ENCODE measurements at regions of chr11 and their contacts with region 1.

Region 1: DNA sequence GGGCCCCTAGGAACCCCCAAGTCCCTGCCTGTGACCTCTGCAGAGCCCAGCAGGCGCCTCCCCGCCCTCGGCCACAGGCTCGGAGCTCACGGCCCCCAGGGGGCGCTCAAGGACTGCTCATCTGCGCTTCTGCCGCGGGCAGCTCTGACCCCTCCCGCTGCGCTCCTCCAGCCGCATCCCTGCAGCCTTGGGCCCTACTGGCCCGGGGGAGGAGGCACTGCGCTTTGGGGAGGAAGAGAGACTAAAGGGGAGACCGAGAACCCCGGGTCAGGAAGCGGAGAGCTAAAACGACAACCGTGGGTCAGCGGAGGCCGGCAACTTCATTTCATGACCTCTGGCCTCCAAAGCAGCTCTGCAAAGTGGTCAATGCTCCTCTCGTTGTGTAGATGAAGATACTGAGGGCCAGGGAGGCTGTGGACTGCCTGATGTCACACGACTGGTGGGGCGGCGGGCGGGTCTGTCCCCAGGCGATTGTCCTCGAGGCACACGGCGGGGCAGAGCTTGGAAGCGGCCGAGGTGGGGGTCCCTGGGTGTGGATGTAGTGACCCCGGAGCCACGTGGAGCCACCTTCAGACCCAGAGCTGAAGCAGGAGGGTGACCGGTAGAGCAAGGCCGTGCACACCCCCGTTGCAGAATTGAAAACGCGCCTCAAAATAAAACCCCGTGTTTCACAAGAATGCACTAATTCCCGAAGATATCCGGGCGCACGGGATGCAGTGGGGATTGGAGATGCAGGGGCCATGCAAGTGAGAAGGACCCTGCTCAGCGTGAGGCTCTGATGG is 2.7 kb upstream of the KRTAP5-6 start:
- DNase-seq: peak; percentile 50 to 75 (median 70)
- H3K4me3 ChIP-seq: peak overlapping the region in 1 of 2 donors; percentile 19
- H3K4me3 Mint-ChIP-seq: peak overlapping the region in 1 of 8 donors; percentile 20
- H3K27ac ChIP-seq: no peak overlapping the region
- H3K27ac Mint-ChIP-seq: peak overlapping the region in 2 of 7 donors; percentile 18 to 46
- H3K4me1 ChIP-seq: peaks cover 11% of the 10 kb centered on the region
- H3K4me1 Mint-ChIP-seq: peaks cover 3 to 8% (median 4%) of the 10 kb centered on the region in 4 donors
- H3K27me3 ChIP-seq: peaks cover 4% of the 10 kb centered on the region
- H3K27me3 Mint-ChIP-seq: peaks cover 12 to 24% of the 10 kb centered on the region in 2 donors

Region 2: GRCh38 chr11:1202776-1203504 is 491.3 kb before region 1 on chr11:
- CTCF ChIA-PET with region 1: no interaction called
- POLR2A ChIA-PET with region 1: no interaction called
- intact Hi-C with region 1: no loop called
- DNase-seq: peak; percentile 37 to 61 (median 49)
- H3K4me3 ChIP-seq: no peak overlapping the region
- H3K4me3 Mint-ChIP-seq: no peak overlapping the region
- H3K27ac ChIP-seq: no peak overlapping the region
- H3K27ac Mint-ChIP-seq: no peak overlapping the region
- H3K4me1 ChIP-seq: no peaks in the 10 kb centered on the region
- H3K4me1 Mint-ChIP-seq: no peaks in the 10 kb centered on the region
- H3K27me3 ChIP-seq: no peaks in the 10 kb centered on the region
- H3K27me3 Mint-ChIP-seq: peaks cover 0 to 3% of the 10 kb centered on the region in 2 donors

Region 3: DNA sequence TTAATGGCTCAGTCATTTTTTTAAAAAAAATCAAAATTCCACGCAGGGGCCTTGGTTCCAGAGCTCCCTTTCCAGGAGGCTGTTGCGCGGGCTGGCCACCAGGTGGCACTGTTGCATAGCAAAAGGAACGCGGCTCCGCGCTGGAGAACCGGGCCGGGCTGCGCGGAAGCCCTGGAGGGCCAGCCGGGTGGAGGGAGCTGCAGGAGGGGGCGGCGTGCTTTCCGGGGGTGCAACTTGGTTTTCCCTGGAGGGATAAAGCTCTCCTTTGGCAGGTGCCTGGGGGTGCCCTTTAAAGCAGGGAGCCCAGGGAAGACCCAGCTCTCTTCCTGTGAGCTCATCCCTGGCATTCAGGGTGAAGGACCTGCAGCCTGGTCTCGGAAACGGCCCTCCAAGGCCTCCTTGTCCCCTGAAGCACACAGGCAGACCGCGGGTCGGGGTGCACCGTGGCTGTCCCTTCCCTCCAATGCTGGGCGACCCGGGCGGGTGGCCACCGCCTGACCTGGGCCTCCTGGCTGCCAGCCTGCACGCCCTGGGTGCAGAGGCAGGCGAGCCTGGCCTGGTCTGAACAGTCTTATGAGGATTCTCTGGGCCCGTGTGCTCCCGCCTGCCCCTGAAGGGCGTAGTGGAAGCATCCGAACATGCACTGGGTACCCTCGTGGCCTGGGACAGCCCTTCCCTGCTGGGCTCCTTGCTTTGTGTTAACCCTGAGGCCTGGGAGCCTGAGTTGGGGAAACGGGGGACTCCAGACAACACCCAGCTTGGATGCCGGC is 41.3 kb before region 1 on chr11:
- CTCF ChIA-PET with region 1: interaction called, 59 read pairs
- POLR2A ChIA-PET with region 1: interaction called, 6 read pairs
- intact Hi-C with region 1: no loop called
- DNase-seq: peak; percentile 62 to 79 (median 72)
- H3K4me3 ChIP-seq: no peak overlapping the region
- H3K4me3 Mint-ChIP-seq: no peak overlapping the region
- H3K27ac ChIP-seq: no peak overlapping the region
- H3K27ac Mint-ChIP-seq: peak overlapping the region in 1 of 7 donors; percentile 57
- H3K4me1 ChIP-seq: no peaks in the 10 kb centered on the region
- H3K4me1 Mint-ChIP-seq: peaks cover 0 to 2% (median under 1%) of the 10 kb centered on the region in 4 donors
- H3K27me3 ChIP-seq: no peaks in the 10 kb centered on the region
- H3K27me3 Mint-ChIP-seq: peaks cover 7 to 15% of the 10 kb centered on the region in 2 donors

Region 4: GRCh38 chr11:1706634-1707400 is 12.6 kb after region 1 on chr11:
- CTCF ChIA-PET with region 1: interaction called, 16 read pairs
- POLR2A ChIA-PET with region 1: interaction called, 3 read pairs
- intact Hi-C with region 1: no loop called
- DNase-seq: peak in 2 of 5 donors; percentile 11 to 19
- H3K4me3 ChIP-seq: no peak overlapping the region
- H3K4me3 Mint-ChIP-seq: peak overlapping the region in 1 of 8 donors; percentile 20
- H3K27ac ChIP-seq: no peak overlapping the region
- H3K27ac Mint-ChIP-seq: peak overlapping the region in 1 of 7 donors; percentile 30
- H3K4me1 ChIP-seq: no peaks in the 10 kb centered on the region
- H3K4me1 Mint-ChIP-seq: peaks cover 0 to 3% (median under 1%) of the 10 kb centered on the region in 4 donors
- H3K27me3 ChIP-seq: no peaks in the 10 kb centered on the region
- H3K27me3 Mint-ChIP-seq: peaks cover 5 to 18% of the 10 kb centered on the region in 2 donors

Region 5: GRCh38 chr11:1744137-1744886 is 50.1 kb after region 1 on chr11:
- CTCF ChIA-PET with region 1: no interaction called
- POLR2A ChIA-PET with region 1: no interaction called
- intact Hi-C with region 1: no loop called
- DNase-seq: no peak
- H3K4me3 ChIP-seq: no peak overlapping the region
- H3K4me3 Mint-ChIP-seq: no peak overlapping the region
- H3K27ac ChIP-seq: no peak overlapping the region
- H3K27ac Mint-ChIP-seq: no peak overlapping the region
- H3K4me1 ChIP-seq: peaks cover 3% of the 10 kb centered on the region
- H3K4me1 Mint-ChIP-seq: peaks cover 0 to 11% (median 6%) of the 10 kb centered on the region in 4 donors
- H3K27me3 ChIP-seq: no peaks in the 10 kb centered on the region
- H3K27me3 Mint-ChIP-seq: peaks cover 0 to 4% of the 10 kb centered on the region in 2 donors

Region 6: DNA sequence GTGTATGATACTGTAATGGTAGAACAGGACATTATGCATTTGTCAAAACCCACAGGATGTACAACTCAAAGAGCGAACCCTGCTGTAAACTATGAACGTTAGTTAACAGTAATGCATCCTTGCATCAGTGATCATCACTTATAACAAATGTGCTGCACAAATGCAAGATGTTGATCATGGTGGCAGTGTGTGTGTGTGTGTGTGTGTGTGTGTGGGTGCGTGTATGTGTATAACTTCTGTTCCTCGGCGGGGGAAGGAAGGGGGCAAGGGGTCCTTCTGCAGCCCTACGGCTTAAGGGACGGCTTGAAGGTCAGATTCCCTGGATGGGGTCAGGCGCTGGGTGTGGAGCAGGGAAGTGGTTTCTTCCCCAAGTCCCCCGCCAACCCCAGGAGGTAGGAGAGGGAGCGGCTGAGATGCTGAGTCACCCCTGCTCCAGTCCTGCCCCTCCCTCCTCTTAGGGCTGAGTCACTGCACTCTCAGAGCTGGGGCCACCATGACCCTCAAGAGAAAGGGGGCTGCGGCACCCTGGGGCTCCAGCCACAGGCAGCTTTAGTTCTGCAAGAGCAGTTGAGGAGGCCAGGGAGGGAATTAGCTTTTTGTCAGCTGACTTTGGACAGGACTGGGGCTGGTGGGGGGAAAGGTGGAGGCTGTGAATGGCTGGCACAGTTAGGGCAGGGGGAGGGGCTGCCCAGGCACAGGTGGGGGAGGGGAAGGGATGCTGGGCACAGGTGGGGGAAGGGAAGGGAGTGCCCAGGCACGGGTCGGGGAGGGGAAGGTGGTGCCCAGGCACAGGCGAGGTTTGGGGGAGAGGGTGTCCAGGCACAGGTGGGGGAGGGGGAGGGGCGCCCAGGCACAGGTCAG is 78.2 kb after region 1 on chr11:
- CTCF ChIA-PET with region 1: interaction called, 26 read pairs
- POLR2A ChIA-PET with region 1: no interaction called
- intact Hi-C with region 1: no loop called
- DNase-seq: peak; percentile 29 to 70 (median 37)
- H3K4me3 ChIP-seq: no peak overlapping the region
- H3K4me3 Mint-ChIP-seq: peak overlapping the region; percentile 50 to 87 (median 64)
- H3K27ac ChIP-seq: no peak overlapping the region
- H3K27ac Mint-ChIP-seq: peak overlapping the region in 6 of 7 donors; percentile 37 to 85 (median 74)
- H3K4me1 ChIP-seq: peaks cover 19% of the 10 kb centered on the region
- H3K4me1 Mint-ChIP-seq: peaks cover 8 to 23% (median 15%) of the 10 kb centered on the region in 4 donors
- H3K27me3 ChIP-seq: no peaks in the 10 kb centered on the region
- H3K27me3 Mint-ChIP-seq: no peaks in the 10 kb centered on the region

Region 7: DNA sequence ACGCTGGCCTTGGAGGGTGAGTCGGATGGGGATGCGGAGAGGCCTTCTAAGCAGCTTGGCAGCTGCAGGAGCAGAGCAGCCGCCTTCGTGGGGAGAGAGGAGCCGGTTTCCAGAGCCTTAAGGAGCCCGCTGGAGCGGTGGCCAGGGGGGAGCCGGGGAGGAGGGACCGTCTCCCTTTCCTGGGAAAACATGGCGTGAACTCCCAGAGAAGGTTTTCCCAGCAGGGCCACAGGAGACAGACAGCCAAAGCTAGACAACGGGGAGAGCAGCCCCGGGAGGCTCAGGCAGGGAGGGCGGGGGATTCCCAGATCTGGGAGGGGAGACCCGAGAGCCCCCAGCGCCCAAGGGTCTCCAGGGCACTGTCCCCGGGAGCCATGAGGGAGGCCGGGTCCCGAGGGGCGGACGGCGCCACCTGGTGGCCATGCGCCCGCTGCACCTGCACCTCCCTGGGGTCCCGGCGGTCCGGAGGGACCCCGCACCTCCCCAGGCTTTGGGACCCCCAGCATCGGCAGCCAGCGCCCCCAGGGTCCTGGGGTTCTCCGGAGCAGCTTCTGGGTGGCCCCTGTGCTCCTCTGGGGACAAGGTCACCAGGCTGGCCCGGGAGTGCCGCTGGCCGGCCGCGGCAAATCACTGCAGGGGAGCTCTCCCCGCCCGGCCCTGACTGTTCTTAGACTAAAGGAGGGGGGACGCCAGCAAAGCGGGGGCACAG is 138.1 kb after region 1 on chr11:
- CTCF ChIA-PET with region 1: interaction called, 351 read pairs
- POLR2A ChIA-PET with region 1: interaction called, 25 read pairs
- intact Hi-C with region 1: loop called (anchors 1 kb)
- DNase-seq: peak; percentile 33 to 71 (median 57)
- H3K4me3 ChIP-seq: no peak overlapping the region
- H3K4me3 Mint-ChIP-seq: no peak overlapping the region
- H3K27ac ChIP-seq: no peak overlapping the region
- H3K27ac Mint-ChIP-seq: peak overlapping the region in 1 of 7 donors; percentile 53
- H3K4me1 ChIP-seq: peaks cover 5% of the 10 kb centered on the region
- H3K4me1 Mint-ChIP-seq: no peaks in the 10 kb centered on the region
- H3K27me3 ChIP-seq: no peaks in the 10 kb centered on the region
- H3K27me3 Mint-ChIP-seq: peaks cover 7 to 14% of the 10 kb centered on the region in 2 donors

Region 8: DNA sequence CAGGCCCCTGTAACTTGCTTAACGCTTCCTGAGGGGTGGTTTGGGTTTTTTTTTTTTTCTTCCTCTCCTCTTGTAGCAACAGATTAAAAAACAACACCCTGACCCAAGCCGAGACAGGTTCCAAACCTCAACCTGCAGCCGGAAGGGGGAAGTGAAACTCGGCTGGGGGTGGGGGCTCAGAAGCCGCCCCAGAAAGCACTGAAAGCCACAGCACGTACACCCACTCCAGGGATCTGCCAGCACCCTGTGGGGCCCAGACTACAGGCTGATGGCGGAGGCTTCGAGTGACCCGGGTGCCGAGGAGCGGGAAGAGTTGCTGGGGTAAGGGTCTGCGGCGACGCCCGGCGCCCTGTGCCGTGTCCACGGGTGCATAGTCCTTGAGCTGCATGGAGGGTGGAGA is 158.6 kb after region 1 on chr11 and contains the start of gene LSP1:
- CTCF ChIA-PET with region 1: interaction called, 11 read pairs
- POLR2A ChIA-PET with region 1: interaction called, 6 read pairs
- intact Hi-C with region 1: no loop called
- DNase-seq: peak; percentile 88 to 92 (median 88)
- H3K4me3 ChIP-seq: peak within 1 kb of the TSS; percentile 39 to 95
- H3K4me3 Mint-ChIP-seq: peak within 1 kb of the TSS; percentile 95 to 99 (median 98)
- H3K27ac ChIP-seq: peak within 1 kb of the TSS; percentile 77
- H3K27ac Mint-ChIP-seq: peak within 1 kb of the TSS; percentile 96 to 99 (median 98)
- H3K4me1 ChIP-seq: peaks cover 82% of the 10 kb centered on the region
- H3K4me1 Mint-ChIP-seq: peaks cover 25 to 77% (median 50%) of the 10 kb centered on the region in 4 donors
- H3K27me3 ChIP-seq: no peaks in the 10 kb centered on the region
- H3K27me3 Mint-ChIP-seq: no peaks in the 10 kb centered on the region
- total RNA-seq, gene LSP1: 324 to 327 TPM

Region 9: GRCh38 chr11:2002807-2003206 is 308.6 kb after region 1 on chr11:
- CTCF ChIA-PET with region 1: interaction called, 74 read pairs
- POLR2A ChIA-PET with region 1: interaction called, 7 read pairs
- intact Hi-C with region 1: no loop called
- DNase-seq: no peak
- H3K4me3 ChIP-seq: no peak overlapping the region
- H3K4me3 Mint-ChIP-seq: no peak overlapping the region
- H3K27ac ChIP-seq: no peak overlapping the region
- H3K27ac Mint-ChIP-seq: no peak overlapping the region
- H3K4me1 ChIP-seq: no peaks in the 10 kb centered on the region
- H3K4me1 Mint-ChIP-seq: no peaks in the 10 kb centered on the region
- H3K27me3 ChIP-seq: no peaks in the 10 kb centered on the region
- H3K27me3 Mint-ChIP-seq: no peaks in the 10 kb centered on the region